Breast epithelium (tissue), 4 donors: ENCODE measurements at regions of chr19 and their contacts with region 1.

Region 1: GRCh38 chr19:44947041-44947581 is 1.3 kb downstream of the APOC2 start:
- DNase-seq: no peak
- H3K4me3 ChIP-seq: no peak overlapping the region
- H3K27ac ChIP-seq: no peak overlapping the region
- H3K4me1 ChIP-seq: peaks cover 0 to 14% of the 10 kb centered on the region in 2 donors
- H3K27me3 ChIP-seq: no peaks in the 10 kb centered on the region
- CTCF ChIP-seq: no peak
- POLR2A ChIP-seq: no peak

Region 2: GRCh38 chr19:44746946-44747738 is 200.0 kb before region 1 on chr19:
- intact Hi-C with region 1: no loop called
- DNase-seq: peak; percentile 95 to 96
- H3K4me3 ChIP-seq: peak overlapping the region; percentile 76 to 95 (median 76)
- H3K27ac ChIP-seq: peak overlapping the region; percentile 91 to 96
- H3K4me1 ChIP-seq: peaks cover 20% of the 10 kb centered on the region in 2 donors
- H3K27me3 ChIP-seq: no peaks in the 10 kb centered on the region
- CTCF ChIP-seq: no peak
- POLR2A ChIP-seq: peak; percentile 15

Region 3: DNA sequence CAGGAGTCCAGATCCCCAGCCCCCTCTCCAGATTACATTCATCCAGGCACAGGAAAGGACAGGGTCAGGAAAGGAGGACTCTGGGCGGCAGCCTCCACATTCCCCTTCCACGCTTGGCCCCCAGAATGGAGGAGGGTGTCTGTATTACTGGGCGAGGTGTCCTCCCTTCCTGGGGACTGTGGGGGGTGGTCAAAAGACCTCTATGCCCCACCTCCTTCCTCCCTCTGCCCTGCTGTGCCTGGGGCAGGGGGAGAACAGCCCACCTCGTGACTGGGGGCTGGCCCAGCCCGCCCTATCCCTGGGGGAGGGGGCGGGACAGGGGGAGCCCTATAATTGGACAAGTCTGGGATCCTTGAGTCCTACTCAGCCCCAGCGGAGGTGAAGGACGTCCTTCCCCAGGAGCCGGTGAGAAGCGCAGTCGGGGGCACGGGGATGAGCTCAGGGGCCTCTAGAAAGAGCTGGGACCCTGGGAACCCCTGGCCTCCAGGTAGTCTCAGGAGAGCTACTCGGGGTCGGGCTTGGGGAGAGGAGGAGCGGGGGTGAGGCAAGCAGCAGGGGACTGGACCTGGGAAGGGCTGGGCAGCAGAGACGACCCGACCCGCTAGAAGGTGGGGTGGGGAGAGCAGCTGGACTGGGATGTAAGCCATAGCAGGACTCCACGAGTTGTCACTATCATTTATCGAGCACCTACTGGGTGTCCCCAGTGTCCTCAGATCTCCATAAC is 41.5 kb before region 1 on chr19 and contains the start of gene APOE:
- intact Hi-C with region 1: loop called (anchors 5 kb)
- DNase-seq: peak in 1 of 2 donors; percentile 43
- H3K4me3 ChIP-seq: peak within 1 kb of the TSS; percentile 25 to 63 (median 53)
- H3K27ac ChIP-seq: peak within 1 kb of the TSS; percentile 71 to 87
- H3K4me1 ChIP-seq: peaks cover 0 to 9% of the 10 kb centered on the region in 2 donors
- H3K27me3 ChIP-seq: no peaks in the 10 kb centered on the region
- CTCF ChIP-seq: no peak
- POLR2A ChIP-seq: no peak
- total RNA-seq, gene APOE: 439 to 1,162 (median 1,092) TPM